ENCODE measurements at regions of chr2 and their contacts with region 1.

Region 1: GRCh38 chr2:47438106-47438505 is 35.1 kb downstream of the MSH2 start:
- DNase-seq: no peak
- H3K4me3 ChIP-seq: no peak overlapping the region
- H3K27ac ChIP-seq: no peak overlapping the region
- H3K4me1 ChIP-seq: peaks cover 0 to 19% (median 1%) of the 10 kb centered on the region in 4 donors
- H3K27me3 ChIP-seq: no peaks in the 10 kb centered on the region
- CTCF ChIP-seq: no peak

Region 2: GRCh38 chr2:46589358-46589757 is 848.7 kb before region 1 on chr2:
- intact Hi-C with region 1: no loop called
- DNase-seq: no peak
- H3K4me3 ChIP-seq: no peak overlapping the region
- H3K27ac ChIP-seq: no peak overlapping the region
- H3K4me1 ChIP-seq: no peaks in the 10 kb centered on the region
- H3K27me3 ChIP-seq: no peaks in the 10 kb centered on the region
- CTCF ChIP-seq: no peak

Region 3: DNA sequence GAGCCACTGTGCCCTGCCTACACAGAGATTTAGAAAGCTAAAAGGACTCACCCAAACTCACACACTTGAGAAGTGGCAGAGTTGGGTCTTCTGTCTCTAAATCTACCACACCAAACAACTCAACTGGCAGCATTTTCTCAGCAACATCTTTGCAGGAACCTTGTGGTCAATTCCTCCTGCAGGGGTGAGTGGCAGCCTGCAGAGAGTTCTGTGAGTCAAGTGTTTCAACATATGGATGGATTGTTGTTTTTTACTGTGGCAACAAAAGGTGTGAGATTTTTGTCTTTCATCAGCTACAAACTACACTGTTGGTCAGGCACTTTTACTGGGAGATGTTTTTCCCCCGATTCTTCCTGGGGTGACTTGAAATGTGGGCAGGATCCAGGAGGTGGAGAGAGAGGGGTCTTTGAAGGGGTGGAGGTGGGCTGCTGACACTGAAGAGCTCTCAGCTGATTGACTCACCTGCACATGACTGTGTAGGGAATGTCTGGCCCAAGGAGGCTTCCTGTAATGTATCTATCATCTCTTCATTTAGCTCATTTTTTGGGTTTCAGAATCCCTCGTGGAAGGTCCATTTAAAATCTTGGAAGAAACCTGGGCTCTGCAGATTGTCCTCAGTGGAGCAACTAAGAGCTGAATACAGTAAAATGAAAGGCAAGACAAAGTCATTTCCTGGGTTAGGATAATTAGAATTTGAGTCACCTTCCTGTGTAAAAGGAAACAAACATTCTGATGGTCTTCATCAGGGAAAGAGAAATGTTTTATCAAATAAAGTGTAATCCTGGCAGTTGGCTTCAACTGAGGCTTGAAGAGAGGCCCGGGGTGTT is 63.5 kb after region 1 on chr2:
- intact Hi-C with region 1: no loop called
- DNase-seq: no peak
- H3K4me3 ChIP-seq: no peak overlapping the region
- H3K27ac ChIP-seq: no peak overlapping the region
- H3K4me1 ChIP-seq: no peaks in the 10 kb centered on the region
- H3K27me3 ChIP-seq: no peaks in the 10 kb centered on the region
- CTCF ChIP-seq: no peak

Region 4: GRCh38 chr2:47767880-47768609 is 329.9 kb after region 1 on chr2:
- intact Hi-C with region 1: loop called (anchors 2 kb)
- DNase-seq: peak; percentile 43 to 75
- H3K4me3 ChIP-seq: no peak overlapping the region
- H3K27ac ChIP-seq: no peak overlapping the region
- H3K4me1 ChIP-seq: peaks cover 0 to 6% (median 3%) of the 10 kb centered on the region in 4 donors
- H3K27me3 ChIP-seq: no peaks in the 10 kb centered on the region
- CTCF ChIP-seq: peak; percentile 92 to 99